Right ventricle myocardium superior (tissue), 1 donor: ENCODE measurements at regions of chr15 and their contacts with region 1.

Region 1: DNA sequence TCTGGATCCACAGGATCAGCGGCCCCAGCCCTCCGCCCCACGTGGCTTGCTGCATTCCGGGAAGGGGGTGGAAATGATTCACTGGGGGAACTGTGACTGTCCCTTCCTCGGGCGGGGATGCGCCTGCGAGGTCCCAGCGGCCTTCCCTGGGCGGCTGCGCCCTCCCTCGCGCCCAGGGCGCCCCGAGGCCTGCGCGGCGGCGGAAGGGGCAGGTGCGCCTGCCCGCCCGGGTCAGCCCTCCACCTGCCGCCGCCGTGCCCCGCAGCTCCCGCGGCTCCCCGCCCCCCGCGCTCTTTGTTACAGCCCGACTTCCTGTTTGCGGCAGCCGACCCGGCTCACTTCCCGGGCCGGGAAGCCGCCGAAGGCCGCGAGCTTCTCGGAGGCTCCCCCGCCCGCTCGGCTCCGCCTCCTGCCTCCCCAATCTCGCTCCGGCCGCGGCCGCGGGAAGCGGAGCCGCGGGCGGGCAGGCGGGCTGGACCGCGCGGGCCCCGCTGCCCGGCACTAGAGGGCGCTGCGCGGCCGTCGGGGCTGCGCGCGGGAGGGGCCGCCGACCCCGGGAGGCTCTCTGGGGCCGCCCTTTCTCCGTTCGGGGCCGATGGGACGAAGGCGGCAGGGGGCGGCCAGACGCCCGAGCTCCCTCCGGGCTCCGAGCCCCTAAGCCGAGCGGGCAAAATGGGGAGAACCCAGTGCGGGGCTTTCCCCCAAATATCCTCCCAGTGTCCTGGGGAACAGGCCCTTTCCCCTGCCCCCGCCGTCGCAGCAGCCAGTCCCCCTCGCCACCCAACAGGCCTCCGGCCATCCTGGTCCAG is 11.5 kb upstream of the CHAC1 start:
- DNase-seq: peak; percentile 88
- ATAC-seq: peak; percentile 86

Region 2: DNA sequence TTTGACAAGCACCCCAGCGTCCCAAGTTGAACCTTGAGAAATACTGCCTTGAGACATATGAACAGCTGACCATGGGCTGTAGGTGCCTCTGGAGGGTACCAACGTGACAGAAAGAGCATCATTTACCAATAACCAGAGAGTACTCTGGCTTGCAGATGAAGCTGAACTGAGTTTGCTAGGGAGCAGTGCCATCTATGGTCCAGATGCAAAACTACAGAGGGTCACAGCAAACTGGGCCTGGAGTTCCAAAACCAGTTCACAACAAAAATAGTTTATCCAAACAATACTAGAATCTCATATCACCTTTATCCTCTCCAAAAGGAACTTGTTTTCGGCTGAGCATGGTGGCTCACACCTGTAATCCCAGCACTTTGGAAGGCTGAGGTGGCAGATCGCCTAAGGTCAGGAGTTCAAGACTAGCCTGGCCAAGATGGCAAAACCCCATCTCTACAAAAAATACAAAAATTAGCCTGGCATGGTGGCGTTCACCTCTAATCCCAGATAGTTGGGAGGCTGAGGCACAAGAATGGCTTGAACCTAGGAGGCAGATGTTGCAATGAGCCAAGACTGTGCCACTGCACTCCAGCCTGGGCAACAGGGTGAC is 80.9 kb after region 1 on chr15:
- intact Hi-C with region 1: loop called (anchors 5 kb)
- DNase-seq: no peak
- ATAC-seq: peak; percentile 65

Region 3: DNA sequence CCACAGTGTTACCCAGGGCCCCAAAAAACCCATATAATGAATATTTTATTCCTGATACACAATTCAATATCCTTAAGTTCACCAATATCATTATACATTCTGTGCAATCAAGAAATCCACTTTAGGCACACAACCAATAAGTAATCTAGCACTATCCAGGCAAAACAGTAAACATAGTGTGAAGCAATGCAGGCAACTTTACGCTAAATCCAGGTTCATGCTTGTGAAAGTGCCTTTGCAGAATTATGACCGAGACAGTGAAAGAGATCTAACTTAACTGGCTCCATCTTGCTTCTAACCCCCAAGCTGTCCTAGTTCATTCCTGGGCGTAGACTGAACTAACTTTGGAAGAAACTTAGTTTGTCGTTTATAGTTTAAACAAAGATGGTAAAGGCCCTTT is 208.5 kb after region 1 on chr15:
- intact Hi-C with region 1: no loop called
- DNase-seq: no peak
- ATAC-seq: no peak